Left cardiac atrium (tissue), 4 donors: ENCODE measurements at regions of chr9 and their contacts with region 1.

Region 1: GRCh38 chr9:34899535-34900158 is 58.4 kb upstream of the PHF24 start:
- DNase-seq: peak; percentile 82
- ATAC-seq: peak; percentile 99

Region 2: DNA sequence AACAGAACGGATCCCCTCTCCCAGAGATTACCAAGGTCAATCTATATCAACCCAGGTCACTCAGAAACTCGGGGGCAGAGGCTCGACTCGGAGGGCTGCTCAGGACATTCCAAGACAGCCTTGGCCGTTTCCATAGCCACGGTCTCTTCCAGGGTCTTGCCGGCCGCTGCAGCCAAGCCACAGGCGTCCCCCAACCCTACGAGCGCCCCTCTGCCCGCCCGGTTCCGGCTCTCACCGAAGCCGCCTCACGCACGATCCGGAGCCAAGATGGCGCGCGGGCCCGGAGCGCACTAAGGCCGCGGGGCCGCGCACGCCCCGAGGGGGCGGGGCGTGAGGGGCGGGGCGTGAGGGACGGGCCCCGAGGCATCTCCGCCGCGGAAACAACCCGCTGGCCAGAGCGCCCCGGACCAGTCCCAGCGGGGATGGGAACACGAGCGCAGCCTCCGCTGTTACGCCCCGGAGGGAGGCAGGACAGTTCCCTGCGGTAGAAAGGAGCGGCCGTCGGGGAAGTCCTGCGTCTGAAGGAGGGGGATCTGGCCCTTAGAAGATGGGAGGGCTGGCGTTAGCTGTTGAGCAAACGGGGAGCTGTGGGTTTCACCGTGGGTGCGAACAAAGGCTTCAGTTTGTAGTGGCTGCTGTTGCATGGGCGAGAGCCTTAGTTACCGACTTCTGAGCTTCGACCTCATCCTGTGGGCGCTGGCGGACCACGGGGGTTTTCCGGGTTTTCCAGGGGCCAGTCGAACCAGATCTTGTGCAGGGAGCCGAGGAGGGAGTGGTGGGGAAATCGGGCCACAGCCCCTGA is 287.6 kb before region 1 on chr9 and contains the start of gene RPP25L:
- intact Hi-C with region 1: no loop called
- DNase-seq: peak; percentile 91
- ATAC-seq: peak; percentile 97 to 98
- total RNA-seq, gene RPP25L: 20.8 to 27.8 TPM

Region 3: DNA sequence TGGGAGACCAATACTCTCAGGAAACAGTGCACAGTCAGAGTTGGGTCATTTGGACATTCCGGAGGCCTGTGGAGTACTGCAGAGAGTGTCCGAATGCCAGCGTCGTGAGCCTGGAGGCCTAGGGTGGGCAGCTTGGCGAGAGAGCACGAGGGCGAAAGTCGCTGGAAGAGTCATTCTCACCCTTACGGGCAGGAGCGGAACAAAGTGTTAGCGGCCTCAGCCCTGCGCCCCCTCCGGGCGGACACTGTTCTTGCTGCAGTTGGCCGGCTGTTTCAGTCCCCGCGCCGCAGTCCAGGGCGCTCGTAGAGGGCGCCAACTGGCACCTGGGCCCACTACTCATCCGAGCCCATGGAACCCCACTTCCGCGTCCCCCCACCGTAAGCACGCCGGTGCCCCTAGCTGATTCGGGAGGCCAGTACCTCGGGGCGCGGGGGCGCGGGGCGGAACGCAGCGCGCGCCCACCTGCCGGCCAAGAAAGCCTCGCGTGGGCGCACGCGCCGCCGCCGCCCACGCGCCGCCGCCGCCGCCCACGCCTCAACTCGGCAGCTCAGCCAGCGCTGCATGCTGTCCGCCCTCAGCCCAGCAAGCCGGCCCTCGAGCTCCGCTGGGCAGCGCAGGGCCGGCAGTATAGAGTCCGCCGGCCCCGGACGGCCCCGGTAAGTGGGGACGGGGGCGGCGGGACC is 90.0 kb before region 1 on chr9:
- intact Hi-C with region 1: no loop called
- DNase-seq: peak; percentile 23
- ATAC-seq: peak in 1 of 2 donors; percentile 53

Region 4: GRCh38 chr9:34985311-34985899 is 85.8 kb after region 1 on chr9:
- intact Hi-C with region 1: loop called in 1 of 2 experiments (anchors 2 kb)
- DNase-seq: no peak
- ATAC-seq: no peak

Region 5: GRCh38 chr9:35042081-35042604 is 142.5 kb after region 1 on chr9:
- intact Hi-C with region 1: loop called in 1 of 2 experiments (anchors 10 kb)
- DNase-seq: no peak
- ATAC-seq: peak in 1 of 2 donors; percentile 33

Region 6: GRCh38 chr9:35051069-35051967 is 151.7 kb after region 1 on chr9:
- intact Hi-C with region 1: loop called (anchors 5 to 10 kb)
- DNase-seq: peak; percentile 40
- ATAC-seq: peak; percentile 79 to 82

Region 7: DNA sequence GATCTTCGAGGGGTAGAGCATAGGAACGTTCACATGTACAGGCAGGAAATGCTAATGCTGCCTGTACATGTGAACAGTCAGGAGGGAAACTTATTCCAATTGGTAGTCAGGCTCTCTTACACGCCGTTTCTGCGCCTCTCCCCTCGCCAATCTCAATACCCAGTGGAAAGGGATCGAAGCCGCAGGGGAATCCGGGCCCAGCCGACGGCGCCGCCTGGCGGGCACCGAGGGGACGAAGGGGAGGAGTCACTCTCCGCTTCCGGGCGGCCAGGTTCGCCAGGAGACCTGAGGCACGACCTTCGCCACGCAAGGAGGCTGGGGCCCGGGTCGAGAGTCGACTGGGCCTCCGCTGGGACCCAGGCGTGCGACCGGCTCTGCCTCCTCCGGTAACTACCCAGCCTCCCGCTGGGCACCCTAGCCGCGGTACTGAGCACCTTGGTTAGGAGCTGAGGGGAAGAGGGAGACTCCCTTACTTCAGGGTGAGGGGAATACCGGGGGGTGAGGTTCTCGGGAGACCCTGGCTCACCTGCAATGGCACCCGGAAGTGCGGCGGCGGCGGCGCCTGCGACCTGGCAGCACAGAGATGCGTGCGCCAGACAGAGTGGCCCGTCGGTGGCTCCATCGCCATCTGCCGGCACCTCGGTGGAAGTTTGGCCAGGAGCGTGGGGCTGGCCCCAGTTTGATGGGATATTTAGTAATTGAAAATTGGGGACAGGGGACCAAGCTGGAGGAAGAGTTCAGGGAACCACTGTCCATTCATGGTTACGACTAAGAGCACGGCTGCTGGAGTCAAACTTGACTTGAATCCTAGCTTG is 196.6 kb after region 1 on chr9 and contains the start of gene PIGO:
- intact Hi-C with region 1: loop called (anchors 2 to 10 kb)
- DNase-seq: peak; percentile 93
- ATAC-seq: peak; percentile 95
- total RNA-seq, gene PIGO: 10.9 to 11.5 TPM

Region 8: GRCh38 chr9:35470894-35471293 is 571.2 kb after region 1 on chr9:
- intact Hi-C with region 1: loop called in 1 of 2 experiments (anchors 10 kb)
- DNase-seq: no peak
- ATAC-seq: peak; percentile 26 to 44